PC-9 (cell line): ENCODE measurements at regions of chr2 and their contacts with region 1.

Region 1: DNA sequence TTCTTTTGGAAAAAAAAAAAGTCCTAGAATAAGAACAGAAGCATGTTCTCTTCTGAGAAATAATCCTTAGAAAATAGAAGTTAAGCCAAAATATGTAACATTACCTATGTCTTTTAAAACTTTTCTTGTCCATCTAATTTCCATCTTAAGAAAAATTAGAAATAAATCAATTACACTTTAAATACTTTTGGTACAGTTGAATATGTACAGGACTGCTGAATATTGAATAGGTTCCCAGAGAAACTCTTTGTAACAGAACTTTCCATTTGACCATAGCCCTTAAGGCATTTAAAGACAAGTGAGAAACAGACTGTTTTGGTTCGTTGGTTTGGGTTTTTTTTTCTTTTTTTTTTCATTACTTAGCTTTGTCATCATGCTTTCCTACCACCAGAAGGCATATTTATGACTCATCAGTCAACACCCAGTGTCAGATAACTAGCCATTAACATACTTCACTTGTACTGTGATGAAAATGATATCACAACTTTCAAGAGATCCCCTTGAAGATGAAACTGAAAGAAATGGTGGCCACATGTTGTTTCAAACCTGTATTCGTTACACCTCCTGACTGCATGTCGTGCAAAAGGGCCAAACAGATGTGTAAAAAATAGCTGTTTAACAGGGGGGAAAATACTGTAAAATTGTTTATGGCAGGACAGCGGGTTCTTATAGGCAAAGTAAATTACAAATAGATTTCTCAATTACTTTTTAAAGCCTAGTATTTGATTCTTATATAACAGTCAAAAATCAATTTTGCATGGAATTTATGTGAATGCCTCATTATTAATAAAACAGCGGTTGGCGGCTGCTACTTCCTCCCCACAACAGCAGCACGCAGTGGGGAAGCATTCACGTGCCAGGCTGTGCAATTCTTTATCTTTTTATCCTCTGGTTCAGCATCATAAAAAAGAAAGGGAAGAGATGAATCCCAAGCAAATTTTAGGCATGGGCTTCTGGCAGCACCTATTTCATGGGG is 280.7 kb upstream of the HNRNPA3 start:
- DNase-seq: peak in 1 of 2 experiments; percentile 49
- H3K4me3 ChIP-seq: no peak overlapping the region
- H3K27ac ChIP-seq: no peak overlapping the region
- H3K4me1 ChIP-seq: no peaks in the 10 kb centered on the region
- H3K27me3 ChIP-seq: no peaks in the 10 kb centered on the region
- CTCF ChIP-seq: no peak

Region 2: GRCh38 chr2:176333685-176334084 is 598.2 kb before region 1 on chr2:
- CTCF ChIA-PET with region 1: no interaction called
- POLR2A ChIA-PET with region 1: interaction called, 12 read pairs
- intact Hi-C with region 1: no loop called
- DNase-seq: no peak
- H3K4me3 ChIP-seq: no peak overlapping the region
- H3K27ac ChIP-seq: no peak overlapping the region
- H3K4me1 ChIP-seq: no peaks in the 10 kb centered on the region
- H3K27me3 ChIP-seq: no peaks in the 10 kb centered on the region
- CTCF ChIP-seq: no peak

Region 3: DNA sequence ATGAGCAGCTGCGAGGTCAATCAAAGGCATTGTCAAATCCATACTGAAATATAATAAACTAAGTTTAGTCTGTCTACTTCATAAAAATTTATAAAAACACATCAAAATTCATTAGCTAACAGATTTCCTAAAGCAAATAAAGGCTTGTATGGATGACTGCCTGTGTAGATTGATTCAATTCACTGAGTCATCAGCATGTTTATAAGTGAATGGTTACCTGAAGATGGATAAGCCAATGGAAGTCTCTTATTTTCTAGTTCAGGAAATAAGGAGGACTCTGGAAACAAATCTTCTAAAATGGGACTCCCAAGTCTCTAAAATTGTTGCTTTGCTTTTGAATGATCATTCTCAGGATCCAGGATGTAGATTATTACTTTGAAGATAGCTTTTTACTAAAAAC is 223.8 kb after region 1 on chr2:
- CTCF ChIA-PET with region 1: no interaction called
- POLR2A ChIA-PET with region 1: no interaction called
- intact Hi-C with region 1: no loop called
- DNase-seq: no peak
- H3K4me3 ChIP-seq: no peak overlapping the region
- H3K27ac ChIP-seq: no peak overlapping the region
- H3K4me1 ChIP-seq: no peaks in the 10 kb centered on the region
- H3K27me3 ChIP-seq: no peaks in the 10 kb centered on the region
- CTCF ChIP-seq: no peak